PC-9 (cell line): ENCODE measurements at regions of chr16 and their contacts with region 1.

Region 1: GRCh38 chr16:69443927-69444631 is 19.7 kb downstream of the CYB5B start:
- DNase-seq: no peak
- H3K4me3 ChIP-seq: no peak overlapping the region
- H3K27ac ChIP-seq: no peak overlapping the region; the same call in 1 of the 2 replicates
- H3K4me1 ChIP-seq: no peaks in the 10 kb centered on the region; the same call in 1 of the 2 replicates
- H3K27me3 ChIP-seq: no peaks in the 10 kb centered on the region
- CTCF ChIP-seq: no peak

Region 2: DNA sequence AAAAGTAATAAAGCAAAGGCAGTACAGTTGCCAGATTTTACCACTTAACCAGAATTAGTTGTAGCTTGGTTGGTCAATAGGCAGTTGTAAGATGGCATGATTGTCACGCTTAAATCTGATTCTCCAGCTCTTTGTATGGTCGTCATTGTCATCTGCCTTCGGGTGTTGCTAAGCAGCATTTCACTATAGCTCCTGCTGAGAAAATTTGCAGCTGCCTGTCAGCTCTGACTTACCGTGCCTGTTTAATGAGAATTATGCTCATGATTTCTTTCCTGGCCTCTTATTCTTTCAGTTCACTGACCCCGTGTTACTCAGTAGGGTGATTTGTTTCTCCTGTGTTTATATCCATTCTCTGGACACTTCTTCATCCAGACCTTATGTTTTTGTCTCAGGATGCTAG is 534.0 kb before region 1 on chr16:
- CTCF ChIA-PET with region 1: no interaction called
- POLR2A ChIA-PET with region 1: no interaction called
- intact Hi-C with region 1: no loop called
- DNase-seq: no peak
- H3K4me3 ChIP-seq: no peak overlapping the region
- H3K27ac ChIP-seq: no peak overlapping the region
- H3K4me1 ChIP-seq: peaks cover 10% of the 10 kb centered on the region; the same call in 1 of the 2 replicates
- H3K27me3 ChIP-seq: no peaks in the 10 kb centered on the region
- CTCF ChIP-seq: no peak

Region 3: DNA sequence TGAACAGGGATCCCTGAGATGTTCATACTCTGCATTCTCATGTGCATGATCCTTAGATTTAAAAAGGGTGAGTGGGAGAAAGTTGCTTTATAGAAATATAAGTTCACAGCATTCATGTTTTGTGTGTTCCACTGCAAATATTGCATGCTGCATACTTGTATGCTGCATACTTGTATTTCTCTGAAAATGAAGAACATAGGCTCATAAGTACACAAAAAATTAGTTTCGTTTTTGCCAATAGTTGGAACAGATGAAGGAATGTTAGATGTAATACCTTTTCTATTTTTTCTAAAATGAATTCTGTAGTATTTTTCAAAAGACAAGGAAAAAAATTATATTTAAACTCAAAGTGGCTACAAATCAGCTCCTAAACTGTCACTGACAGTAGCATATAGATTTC is 200.7 kb after region 1 on chr16:
- CTCF ChIA-PET with region 1: no interaction called
- POLR2A ChIA-PET with region 1: no interaction called
- intact Hi-C with region 1: loop called (anchors 10 kb)
- DNase-seq: no peak
- H3K4me3 ChIP-seq: no peak overlapping the region
- H3K27ac ChIP-seq: no peak overlapping the region
- H3K4me1 ChIP-seq: no peaks in the 10 kb centered on the region
- H3K27me3 ChIP-seq: no peaks in the 10 kb centered on the region
- CTCF ChIP-seq: no peak

Region 4: GRCh38 chr16:69669577-69669976 is 225.5 kb after region 1 on chr16:
- CTCF ChIA-PET with region 1: no interaction called
- POLR2A ChIA-PET with region 1: no interaction called
- intact Hi-C with region 1: no loop called
- DNase-seq: no peak
- H3K4me3 ChIP-seq: no peak overlapping the region
- H3K27ac ChIP-seq: no peak overlapping the region
- H3K4me1 ChIP-seq: no peaks in the 10 kb centered on the region
- H3K27me3 ChIP-seq: no peaks in the 10 kb centered on the region
- CTCF ChIP-seq: no peak